ENCODE measurements at regions of chr5 and their contacts with region 1.

Region 1: DNA sequence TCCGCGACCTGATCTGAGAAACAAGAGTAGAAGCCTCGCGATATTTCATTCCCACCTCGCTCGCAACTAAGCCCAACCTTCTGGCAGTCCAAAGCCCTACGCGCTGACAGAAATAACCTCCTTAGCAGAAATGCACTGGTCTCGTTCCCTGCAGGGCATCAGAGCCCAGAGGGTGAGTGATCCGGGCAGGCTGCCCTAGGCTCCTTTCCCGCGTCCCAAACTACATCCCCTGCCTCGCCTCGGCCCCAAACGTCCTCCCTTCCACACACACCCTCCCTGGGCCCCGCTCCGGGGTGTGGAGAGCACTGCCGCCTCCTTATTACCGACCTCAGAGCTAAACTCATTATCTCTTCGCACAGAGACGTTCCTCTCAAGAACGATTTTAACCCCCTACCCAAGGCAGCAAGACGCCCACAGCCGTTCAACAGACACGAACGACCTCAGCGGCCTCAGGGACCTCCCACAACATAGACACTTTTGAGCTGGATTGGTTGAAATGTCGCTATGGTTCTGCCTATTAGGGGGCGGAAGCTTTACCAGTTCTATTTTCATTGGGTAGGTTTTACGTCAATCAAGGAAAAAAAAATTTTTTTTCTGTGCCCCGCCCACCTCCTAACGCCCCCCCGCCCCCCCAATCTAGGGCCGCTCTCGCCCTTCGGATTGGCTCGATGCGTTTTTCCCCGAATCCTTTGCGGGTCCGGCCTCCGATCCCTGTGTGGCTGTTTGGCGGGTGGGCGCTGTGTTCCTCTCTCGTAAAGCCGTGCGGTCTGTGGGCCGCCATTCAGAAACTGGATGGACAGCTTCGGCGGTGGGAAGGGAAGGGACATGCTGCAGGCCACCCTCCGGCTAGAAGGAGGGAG is at the start of gene CETN3:
- DNase-seq: peak; percentile 91
- ATAC-seq: peak; percentile 92
- H3K4me3 Mint-ChIP-seq: no peak within 1 kb of the TSS
- H3K27ac Mint-ChIP-seq: no peak within 1 kb of the TSS
- H3K4me1 Mint-ChIP-seq: peaks cover 19% of the 10 kb centered on the region
- H3K27me3 Mint-ChIP-seq: no peaks in the 10 kb centered on the region; the same call in 1 of the 2 replicates
- CTCF ChIP-seq: no peak
- total RNA-seq, gene CETN3: 42.2 to 49.0 TPM (median 48.5 TPM) in 3 replicates

Region 2: DNA sequence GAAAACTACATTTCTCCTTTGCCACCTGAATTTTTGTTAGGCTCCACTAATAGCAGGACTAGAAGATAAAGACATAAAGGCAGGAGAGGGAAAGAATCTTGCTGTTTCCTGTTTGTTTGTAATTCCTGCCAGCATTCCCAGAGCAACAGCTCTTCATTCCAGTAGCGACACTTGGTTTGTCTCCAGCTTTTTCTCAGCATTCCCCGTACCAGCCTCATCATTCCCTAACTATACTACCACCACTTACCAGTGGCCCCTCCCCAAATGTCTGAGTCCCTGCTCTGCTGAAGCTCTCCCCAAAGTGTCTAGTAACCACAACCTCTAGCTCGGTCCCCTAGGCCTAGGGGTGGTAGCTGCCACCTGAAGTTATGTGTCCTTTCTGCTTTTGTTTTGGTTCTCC is 18.6 kb before region 1 on chr5:
- CTCF ChIA-PET with region 1: interaction called, 3 read pairs
- POLR2A ChIA-PET with region 1: interaction called, 17 read pairs
- DNase-seq: no peak
- ATAC-seq: peak; percentile 78
- H3K4me3 Mint-ChIP-seq: no peak overlapping the region
- H3K27ac Mint-ChIP-seq: peak overlapping the region; percentile 46
- H3K4me1 Mint-ChIP-seq: peaks cover 23% of the 10 kb centered on the region
- H3K27me3 Mint-ChIP-seq: no peaks in the 10 kb centered on the region
- CTCF ChIP-seq: no peak

Region 3: GRCh38 chr5:90421136-90421535 is 11.6 kb after region 1 on chr5:
- CTCF ChIA-PET with region 1: interaction called, 10 read pairs
- POLR2A ChIA-PET with region 1: interaction called, 7 read pairs
- DNase-seq: peak; percentile 42
- ATAC-seq: peak; percentile 100
- H3K4me3 Mint-ChIP-seq: no peak overlapping the region
- H3K27ac Mint-ChIP-seq: no peak overlapping the region; the same call in 1 of the 2 replicates
- H3K4me1 Mint-ChIP-seq: peaks cover 8% of the 10 kb centered on the region
- H3K27me3 Mint-ChIP-seq: no peaks in the 10 kb centered on the region
- CTCF ChIP-seq: no peak

Region 4: DNA sequence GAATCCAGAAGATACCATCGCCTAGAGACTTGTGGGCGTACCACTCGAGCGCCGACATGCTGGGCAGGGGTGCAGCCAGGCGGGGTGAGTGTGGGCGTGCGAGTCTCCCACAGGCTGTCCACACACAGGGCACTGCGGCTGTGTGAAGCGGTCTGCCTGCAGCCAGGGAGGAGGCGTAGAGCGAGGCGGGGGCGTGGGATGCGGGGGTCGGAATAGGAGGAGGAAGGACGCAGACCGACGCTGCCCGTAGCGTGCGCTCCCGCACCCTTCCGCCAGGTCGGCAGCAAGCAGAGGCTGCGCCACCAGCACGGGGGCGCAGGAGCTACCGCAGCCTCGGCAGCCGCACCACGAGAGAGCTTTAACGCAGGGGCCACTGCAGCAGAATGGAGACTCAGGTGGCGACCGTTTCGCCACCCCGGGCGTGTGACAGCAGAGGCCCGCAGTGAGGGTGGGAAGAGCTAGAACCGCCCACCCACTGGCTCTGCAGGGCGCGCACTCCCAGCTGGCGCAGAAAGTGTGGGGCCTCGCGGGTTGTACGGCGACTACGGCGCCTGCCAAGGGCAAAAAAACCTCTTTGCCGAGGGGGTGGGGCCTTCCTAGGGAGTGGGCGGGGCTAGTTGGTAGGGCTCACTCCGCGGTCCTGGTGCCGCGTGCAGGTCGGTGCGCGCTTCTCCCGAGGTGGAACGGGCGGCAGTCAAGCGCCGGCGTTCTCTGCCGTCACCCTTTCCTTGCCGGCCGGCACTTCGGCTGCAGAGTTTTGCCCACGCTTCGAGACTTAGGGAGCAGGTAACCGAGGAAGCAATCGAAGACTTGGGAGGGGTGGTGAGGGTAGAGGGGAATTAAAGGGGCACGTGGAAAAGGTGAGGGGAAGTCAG is 64.9 kb after region 1 on chr5 and contains the starts of genes MBLAC2 and POLR3G:
- CTCF ChIA-PET with region 1: interaction called, 3 read pairs
- POLR2A ChIA-PET with region 1: interaction called, 10 read pairs
- DNase-seq: peak; percentile 97
- ATAC-seq: peak; percentile 76
- H3K4me3 Mint-ChIP-seq: peak within 1 kb of the TSS; percentile 81
- H3K27ac Mint-ChIP-seq: peak within 1 kb of the TSS; percentile 90
- H3K4me1 Mint-ChIP-seq: peaks cover 43% of the 10 kb centered on the region
- H3K27me3 Mint-ChIP-seq: no peaks in the 10 kb centered on the region
- CTCF ChIP-seq: no peak
- total RNA-seq, gene MBLAC2: 5.9 to 6.4 TPM (median 6.3 TPM) in 3 replicates
- total RNA-seq, gene POLR3G: 61.0 to 95.4 TPM (median 63.6 TPM) in 3 replicates

Region 5: GRCh38 chr5:90696153-90696552 is 286.6 kb after region 1 on chr5:
- CTCF ChIA-PET with region 1: no interaction called
- POLR2A ChIA-PET with region 1: no interaction called
- DNase-seq: no peak
- ATAC-seq: no peak
- H3K4me3 Mint-ChIP-seq: no peak overlapping the region
- H3K27ac Mint-ChIP-seq: no peak overlapping the region
- H3K4me1 Mint-ChIP-seq: no peaks in the 10 kb centered on the region
- H3K27me3 Mint-ChIP-seq: no peaks in the 10 kb centered on the region
- CTCF ChIP-seq: no peak